Activated CD4-positive, alpha-beta memory T cell treated with anti-CD3 and anti-CD28 coated beads, Interleukin-2, amount 10 ng/mL, durations not matched to agents 7 days and 5 days (primary cell): ENCODE measurements at regions of chr15 and their contacts with region 1.

Region 1: GRCh38 chr15:81265944-81266775 is 57.8 kb downstream of the STARD5 start:
- DNase-seq: peak; percentile 87
- H3K4me3 Mint-ChIP-seq: peak overlapping the region; percentile 47
- H3K27ac Mint-ChIP-seq: peak overlapping the region; percentile 45
- H3K4me1 Mint-ChIP-seq: peaks cover 25% of the 10 kb centered on the region
- H3K27me3 Mint-ChIP-seq: peaks cover 12% of the 10 kb centered on the region

Region 2: DNA sequence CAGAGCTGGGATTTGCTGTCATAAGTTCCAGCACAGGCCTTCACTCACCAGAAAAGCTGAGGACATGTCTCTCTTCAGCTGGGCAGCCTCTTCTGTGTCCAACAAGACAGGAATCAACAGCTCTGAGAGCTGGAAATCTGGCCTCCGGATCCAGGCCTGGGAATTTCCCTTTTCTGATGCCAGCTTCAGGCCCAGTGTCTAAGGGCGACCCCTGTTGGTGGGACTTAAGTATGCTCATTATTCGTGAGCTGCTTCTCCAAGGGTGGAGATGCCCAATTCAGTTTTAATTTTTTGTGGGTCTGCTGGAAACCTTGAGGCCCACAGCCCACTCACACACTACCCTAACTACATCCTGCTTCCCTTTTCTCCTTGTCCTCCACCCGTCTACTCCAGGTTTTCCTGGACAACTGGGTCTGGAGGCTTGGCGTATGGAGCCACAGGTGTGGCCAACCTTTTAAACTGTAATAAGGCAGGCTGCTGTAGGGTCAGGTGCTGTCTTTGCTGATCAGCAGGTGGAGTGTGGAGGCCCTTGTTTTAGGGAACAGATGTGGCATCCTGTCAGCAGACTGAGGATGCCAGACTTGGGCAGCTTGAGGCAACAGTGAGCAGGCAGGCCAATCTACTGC is 489.6 kb before region 1 on chr15:
- CTCF ChIA-PET with region 1: interaction called, 10 read pairs
- POLR2A ChIA-PET with region 1: no interaction called
- DNase-seq: peak; percentile 59
- H3K4me3 Mint-ChIP-seq: no peak overlapping the region
- H3K27ac Mint-ChIP-seq: no peak overlapping the region
- H3K4me1 Mint-ChIP-seq: peaks cover 13% of the 10 kb centered on the region
- H3K27me3 Mint-ChIP-seq: peaks cover 47% of the 10 kb centered on the region

Region 3: DNA sequence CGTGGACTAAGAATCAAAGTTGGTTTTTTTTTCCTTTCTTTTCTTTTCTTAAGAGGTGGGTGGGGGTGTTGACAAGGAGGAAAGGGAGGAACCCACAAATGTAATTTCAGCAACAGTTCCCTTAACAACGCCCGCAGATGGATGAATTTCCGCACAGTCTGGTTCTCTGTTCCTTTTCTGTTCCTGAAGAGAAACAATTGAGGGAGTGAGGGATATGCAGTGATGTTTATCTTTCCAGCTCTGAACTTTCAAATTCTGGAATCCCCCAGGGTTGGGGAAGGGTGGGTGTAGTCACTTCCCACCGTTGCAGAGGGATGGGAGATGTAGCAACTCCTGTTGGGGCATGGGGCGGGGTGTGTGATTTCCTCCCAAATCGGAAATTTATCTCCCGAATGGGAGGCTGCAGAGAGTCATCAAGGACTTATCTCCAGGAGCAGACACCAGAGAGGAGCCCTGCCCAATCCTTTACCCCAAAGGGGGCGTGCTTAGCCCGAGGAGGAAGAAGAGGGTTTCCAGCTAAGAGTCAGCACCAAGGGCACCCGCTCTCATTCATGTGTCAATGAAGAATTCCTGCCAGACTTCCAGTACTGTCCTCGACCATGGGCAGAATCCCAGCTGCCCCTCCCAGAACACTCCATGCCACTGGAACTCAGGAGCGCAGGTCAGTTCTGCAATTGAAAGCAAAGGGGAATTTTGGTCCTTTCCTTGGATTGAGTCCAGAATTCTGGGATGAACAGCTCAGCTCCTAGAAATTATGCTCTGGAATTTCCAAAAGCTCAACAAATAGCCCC is 167.1 kb before region 1 on chr15:
- CTCF ChIA-PET with region 1: interaction called, 296 read pairs
- POLR2A ChIA-PET with region 1: no interaction called
- DNase-seq: no peak
- H3K4me3 Mint-ChIP-seq: no peak overlapping the region
- H3K27ac Mint-ChIP-seq: no peak overlapping the region
- H3K4me1 Mint-ChIP-seq: peaks cover 20% of the 10 kb centered on the region
- H3K27me3 Mint-ChIP-seq: peaks cover 40% of the 10 kb centered on the region

Region 4: GRCh38 chr15:81146006-81146405 is 120.2 kb before region 1 on chr15:
- CTCF ChIA-PET with region 1: interaction called, 405 read pairs
- POLR2A ChIA-PET with region 1: no interaction called
- DNase-seq: no peak
- H3K4me3 Mint-ChIP-seq: no peak overlapping the region
- H3K27ac Mint-ChIP-seq: no peak overlapping the region
- H3K4me1 Mint-ChIP-seq: peaks cover 2% of the 10 kb centered on the region
- H3K27me3 Mint-ChIP-seq: peaks cover 9% of the 10 kb centered on the region

Region 5: DNA sequence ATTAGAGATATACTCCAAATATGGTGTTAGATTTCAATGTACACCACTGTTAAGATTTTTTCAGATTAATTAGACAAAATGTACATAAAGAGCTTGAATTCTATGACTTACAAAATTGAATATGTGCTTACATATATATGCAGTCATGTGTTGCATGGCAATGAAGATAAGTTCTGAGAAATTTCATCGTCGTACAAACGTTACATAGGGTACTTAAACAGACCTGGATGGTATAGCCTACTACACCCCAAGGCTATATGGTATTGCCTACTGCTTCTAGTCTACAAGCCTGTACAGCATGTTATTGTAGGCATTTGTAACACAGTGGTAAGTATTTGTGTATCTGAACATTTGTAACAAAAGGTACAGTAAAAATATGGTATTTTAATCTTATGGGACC is 60.1 kb before region 1 on chr15:
- CTCF ChIA-PET with region 1: no interaction called
- POLR2A ChIA-PET with region 1: no interaction called
- DNase-seq: no peak
- H3K4me3 Mint-ChIP-seq: no peak overlapping the region
- H3K27ac Mint-ChIP-seq: no peak overlapping the region
- H3K4me1 Mint-ChIP-seq: no peaks in the 10 kb centered on the region
- H3K27me3 Mint-ChIP-seq: peaks cover 25% of the 10 kb centered on the region

Region 6: GRCh38 chr15:81221449-81221848 is 44.7 kb before region 1 on chr15:
- CTCF ChIA-PET with region 1: interaction called, 12 read pairs
- POLR2A ChIA-PET with region 1: no interaction called
- DNase-seq: no peak
- H3K4me3 Mint-ChIP-seq: no peak overlapping the region
- H3K27ac Mint-ChIP-seq: no peak overlapping the region
- H3K4me1 Mint-ChIP-seq: peaks cover 2% of the 10 kb centered on the region
- H3K27me3 Mint-ChIP-seq: peaks cover 18% of the 10 kb centered on the region

Region 7: DNA sequence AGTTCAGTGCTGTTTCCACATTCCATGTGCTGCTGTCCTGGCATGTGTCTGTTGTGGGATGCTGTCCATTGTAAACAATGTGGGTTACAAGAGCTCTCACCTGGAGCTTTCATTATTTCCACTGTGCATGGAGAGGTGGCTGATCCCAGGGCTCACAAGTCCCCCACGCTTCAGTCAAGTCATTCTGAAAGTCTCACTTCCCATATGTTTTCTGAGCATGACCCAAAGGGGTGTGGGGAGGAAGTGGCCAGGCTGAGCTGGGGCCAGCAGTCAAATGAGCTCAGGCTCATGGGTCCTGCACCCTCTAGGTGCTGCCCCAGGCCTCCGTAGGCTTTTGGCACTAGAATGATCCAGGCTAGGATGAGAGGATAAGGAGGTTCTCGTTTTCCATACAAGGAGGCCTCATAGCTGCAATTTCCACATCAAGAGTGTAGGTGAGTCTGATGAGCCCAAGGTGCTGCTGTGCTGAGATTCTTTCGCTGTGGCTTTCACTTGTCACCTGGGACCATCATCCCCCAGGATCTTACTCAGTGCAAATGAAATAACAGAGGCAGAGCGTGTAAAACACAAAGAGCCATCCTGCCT is 35.7 kb after region 1 on chr15:
- CTCF ChIA-PET with region 1: interaction called, 35 read pairs
- POLR2A ChIA-PET with region 1: interaction called, 4 read pairs
- DNase-seq: peak; percentile 60
- H3K4me3 Mint-ChIP-seq: peak overlapping the region; percentile 98
- H3K27ac Mint-ChIP-seq: peak overlapping the region; percentile 78
- H3K4me1 Mint-ChIP-seq: peaks cover 58% of the 10 kb centered on the region
- H3K27me3 Mint-ChIP-seq: no peaks in the 10 kb centered on the region

Region 8: DNA sequence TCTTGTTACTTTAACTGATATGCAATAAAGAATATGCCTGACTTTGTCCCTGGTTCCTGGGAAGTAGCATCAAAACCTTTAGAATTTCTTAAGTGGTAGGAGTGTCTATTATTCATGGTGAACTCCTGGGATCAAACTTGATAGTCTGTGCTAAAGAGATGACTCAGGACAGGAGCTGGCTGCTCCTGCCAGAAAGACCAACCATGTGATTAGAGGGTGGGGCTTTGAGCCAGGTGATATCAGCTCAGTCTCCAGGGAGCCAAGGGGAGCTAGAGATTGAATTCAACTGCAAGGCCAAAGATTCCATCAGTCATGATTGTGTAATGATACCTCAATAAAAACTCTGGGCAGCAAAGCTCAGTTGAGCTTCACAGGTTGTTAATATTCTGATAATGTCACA is 128.4 kb after region 1 on chr15:
- CTCF ChIA-PET with region 1: interaction called, 84 read pairs
- POLR2A ChIA-PET with region 1: no interaction called
- DNase-seq: no peak
- H3K4me3 Mint-ChIP-seq: no peak overlapping the region
- H3K27ac Mint-ChIP-seq: no peak overlapping the region
- H3K4me1 Mint-ChIP-seq: no peaks in the 10 kb centered on the region
- H3K27me3 Mint-ChIP-seq: no peaks in the 10 kb centered on the region